IMR-90 (cell line): ENCODE measurements at regions of chr7 and their contacts with region 1.

Region 1: DNA sequence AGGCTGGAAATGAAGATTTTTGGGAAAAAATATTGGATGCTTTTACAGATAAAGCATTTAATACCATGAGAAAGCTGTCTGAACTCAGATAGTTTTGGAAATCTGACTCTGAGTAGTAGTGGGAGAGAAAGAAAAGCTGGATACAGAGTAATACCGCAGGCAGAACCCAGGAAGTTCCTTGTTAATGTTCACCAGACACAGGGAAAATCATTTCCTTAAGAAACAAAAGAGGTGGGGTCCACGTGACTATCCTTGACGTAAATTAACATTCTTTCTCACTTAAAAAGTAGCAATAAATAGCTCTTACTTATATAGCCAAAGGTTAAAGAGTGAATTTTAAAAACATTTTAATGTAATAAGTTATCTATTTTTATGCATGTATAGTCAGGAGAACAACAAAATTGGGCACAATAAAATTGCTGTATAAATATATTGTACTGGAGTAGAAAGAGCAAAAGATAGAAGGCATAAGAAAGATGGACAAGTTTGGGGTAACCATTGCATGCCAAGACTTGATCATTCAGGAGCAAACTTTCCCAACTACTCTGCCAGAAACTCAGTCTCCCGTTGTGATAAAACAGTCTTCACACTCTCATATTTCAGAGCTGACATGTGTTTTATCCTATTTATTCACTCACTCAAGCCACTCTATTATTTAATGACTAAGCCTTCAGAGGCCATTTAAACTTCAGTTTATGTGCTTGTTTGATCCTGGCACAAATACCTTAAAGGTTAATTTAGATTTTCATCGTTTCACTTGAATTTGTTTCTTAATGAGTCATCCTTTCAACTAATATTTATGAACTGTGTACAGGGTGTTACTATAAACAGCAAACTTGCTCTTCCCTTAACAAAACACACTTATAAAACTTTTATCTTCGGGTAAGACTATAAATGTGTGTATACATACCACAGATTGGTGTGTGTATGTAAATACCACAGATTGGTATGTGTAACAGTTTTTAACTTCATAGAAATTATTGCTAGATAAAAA is 143.1 kb downstream of the GNAI1 start:
- DNase-seq: peak; percentile 32
- ATAC-seq: peak; percentile 79
- H3K4me3 ChIP-seq: no peak overlapping the region
- H3K27ac ChIP-seq: 0 out of 2 replicates have a peak overlapping the region, but pooled peaks have one; percentile 54
- H3K4me1 ChIP-seq: peaks cover 6% of the 10 kb centered on the region
- H3K27me3 ChIP-seq: no peaks in the 10 kb centered on the region
- CTCF ChIP-seq: no peak
- POLR2A ChIP-seq: no peak
- RAD21 ChIP-seq: no peak

Region 2: GRCh38 chr7:80107278-80107677 is 170.5 kb before region 1 on chr7:
- CTCF ChIA-PET with region 1: no interaction called
- POLR2A ChIA-PET with region 1: no interaction called
- dilution Hi-C with region 1: no loop called
- in situ Hi-C with region 1: no loop called
- intact Hi-C with region 1: no loop called
- DNase-seq: no peak
- ATAC-seq: no peak
- H3K4me3 ChIP-seq: no peak overlapping the region
- H3K27ac ChIP-seq: no peak overlapping the region
- H3K4me1 ChIP-seq: no peaks in the 10 kb centered on the region
- H3K27me3 ChIP-seq: no peaks in the 10 kb centered on the region
- CTCF ChIP-seq: no peak
- POLR2A ChIP-seq: no peak
- RAD21 ChIP-seq: no peak

Region 3: DNA sequence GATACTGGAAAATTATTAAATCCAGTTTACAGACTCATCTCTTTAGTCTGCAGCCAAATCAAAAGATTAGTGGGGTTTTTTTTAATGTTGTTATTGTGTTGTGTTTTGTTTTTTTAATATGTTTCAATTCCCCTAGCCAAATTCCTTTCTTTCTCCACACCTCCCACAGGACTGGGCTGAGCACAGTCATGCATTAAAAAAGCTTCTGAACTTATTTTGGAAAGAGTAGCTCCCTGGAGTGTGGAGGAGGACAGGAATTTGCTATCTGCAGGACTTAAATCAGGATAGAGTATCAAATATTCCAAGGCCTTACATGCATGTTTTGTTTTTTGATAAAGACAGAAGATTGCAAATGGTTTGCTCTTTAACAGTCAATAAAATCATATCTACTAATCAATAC is 52.4 kb before region 1 on chr7:
- CTCF ChIA-PET with region 1: no interaction called
- POLR2A ChIA-PET with region 1: no interaction called
- dilution Hi-C with region 1: no loop called
- in situ Hi-C with region 1: no loop called
- intact Hi-C with region 1: loop called (anchors 5 kb)
- DNase-seq: no peak
- ATAC-seq: no peak; the same call in 1 of the 2 replicates
- H3K4me3 ChIP-seq: no peak overlapping the region
- H3K27ac ChIP-seq: no peak overlapping the region
- H3K4me1 ChIP-seq: no peaks in the 10 kb centered on the region; the same call in 1 of the 2 replicates
- H3K27me3 ChIP-seq: no peaks in the 10 kb centered on the region
- CTCF ChIP-seq: no peak
- POLR2A ChIP-seq: no peak
- RAD21 ChIP-seq: no peak

Region 4: GRCh38 chr7:80288175-80289122 is 10.7 kb after region 1 on chr7:
- CTCF ChIA-PET with region 1: no interaction called
- POLR2A ChIA-PET with region 1: interaction called, 20 read pairs
- dilution Hi-C with region 1: no loop called
- in situ Hi-C with region 1: no loop called
- intact Hi-C with region 1: no loop called
- DNase-seq: peak; percentile 84
- ATAC-seq: peak; percentile 65
- H3K4me3 ChIP-seq: no peak overlapping the region
- H3K27ac ChIP-seq: no peak overlapping the region
- H3K4me1 ChIP-seq: no peaks in the 10 kb centered on the region
- H3K27me3 ChIP-seq: no peaks in the 10 kb centered on the region; the same call in 1 of the 2 replicates
- CTCF ChIP-seq: peak; percentile 29; the same call in 1 of the 2 replicates
- POLR2A ChIP-seq: no peak
- RAD21 ChIP-seq: no peak

Region 5: DNA sequence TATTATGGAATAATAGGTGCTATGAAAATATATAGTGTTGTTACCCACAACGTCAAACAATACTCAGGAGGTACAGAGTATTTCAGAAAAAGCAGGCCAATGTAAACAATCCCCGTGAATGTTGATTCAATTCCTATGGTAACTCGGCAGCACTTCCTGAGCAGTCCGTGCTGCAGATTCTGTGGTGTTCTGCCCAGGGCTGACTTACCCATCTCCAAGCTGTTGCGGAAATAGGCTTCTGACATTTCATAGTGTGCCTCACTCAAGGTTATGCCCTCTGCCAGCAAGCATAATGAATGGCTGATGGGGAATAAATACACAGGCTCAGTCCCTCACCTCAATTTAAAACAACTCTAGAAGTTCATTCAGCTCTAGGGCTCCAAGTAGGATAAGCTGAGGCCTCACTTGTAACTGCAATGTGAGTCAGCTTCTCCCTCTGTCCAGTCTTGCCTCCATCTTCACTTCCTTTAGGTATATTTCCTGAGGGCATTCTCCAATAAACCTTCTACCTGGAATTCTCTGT is 34.5 kb after region 1 on chr7:
- CTCF ChIA-PET with region 1: no interaction called
- POLR2A ChIA-PET with region 1: no interaction called
- dilution Hi-C with region 1: no loop called
- in situ Hi-C with region 1: no loop called
- intact Hi-C with region 1: no loop called
- DNase-seq: peak; percentile 94
- ATAC-seq: peak; percentile 92
- H3K4me3 ChIP-seq: no peak overlapping the region
- H3K27ac ChIP-seq: no peak overlapping the region; the same call in 1 of the 2 replicates
- H3K4me1 ChIP-seq: peaks cover 9% of the 10 kb centered on the region
- H3K27me3 ChIP-seq: no peaks in the 10 kb centered on the region
- CTCF ChIP-seq: no peak
- POLR2A ChIP-seq: no peak
- RAD21 ChIP-seq: 0 out of 2 replicates have a peak, but pooled peaks have one; percentile 6